ENCODE measurements at regions of chr7 and their contacts with region 1.

Region 1: DNA sequence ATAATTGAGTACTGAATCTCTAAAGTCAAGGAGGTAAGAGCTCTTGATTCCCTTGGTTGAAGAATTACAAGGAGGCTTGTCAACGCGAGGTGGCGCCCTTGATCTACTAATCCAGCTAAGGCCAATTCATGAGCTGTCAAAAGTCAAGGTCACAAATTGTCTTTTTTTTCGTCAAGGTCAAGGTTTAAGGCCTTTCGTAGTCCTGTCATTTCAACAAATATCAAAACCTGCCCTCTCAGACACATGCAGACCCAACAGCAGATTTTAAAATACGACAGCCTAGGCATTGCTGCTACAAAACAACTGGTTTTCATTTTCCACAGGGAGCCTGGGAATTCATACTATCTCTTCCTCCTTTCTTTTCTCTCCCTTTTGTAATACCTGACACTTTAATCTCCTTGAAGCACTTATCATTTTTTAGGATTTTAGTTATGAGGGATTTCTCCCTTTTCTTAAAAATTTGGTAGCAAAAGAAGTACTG is 3.6 kb downstream of the HOXA13 start:
- DNase-seq: peak; percentile 84
- H3K4me3 ChIP-seq: no peak overlapping the region
- H3K27ac ChIP-seq: no peak overlapping the region
- H3K4me1 ChIP-seq: peaks cover 16% of the 10 kb centered on the region
- H3K27me3 ChIP-seq: peaks cover 52 to 78% of the 10 kb centered on the region in 2 experiments
- CTCF ChIP-seq: peak; percentile 66 to 68
- POLR2A ChIP-seq: no peak

Region 2: GRCh38 chr7:27179503-27180430 is 16.6 kb before region 1 on chr7:
- CTCF ChIA-PET with region 1: interaction called, 28 read pairs
- POLR2A ChIA-PET with region 1: no interaction called
- dilution Hi-C with region 1: no loop called
- intact Hi-C with region 1: no loop called
- DNase-seq: peak; percentile 90
- H3K4me3 ChIP-seq: peak overlapping the region; percentile 53 to 94 (median 69)
- H3K27ac ChIP-seq: peak overlapping the region; percentile 96
- H3K4me1 ChIP-seq: peaks cover 65% of the 10 kb centered on the region
- H3K27me3 ChIP-seq: no peaks in the 10 kb centered on the region
- CTCF ChIP-seq: peak; percentile 93 to 97
- POLR2A ChIP-seq: no peak

Region 3: DNA sequence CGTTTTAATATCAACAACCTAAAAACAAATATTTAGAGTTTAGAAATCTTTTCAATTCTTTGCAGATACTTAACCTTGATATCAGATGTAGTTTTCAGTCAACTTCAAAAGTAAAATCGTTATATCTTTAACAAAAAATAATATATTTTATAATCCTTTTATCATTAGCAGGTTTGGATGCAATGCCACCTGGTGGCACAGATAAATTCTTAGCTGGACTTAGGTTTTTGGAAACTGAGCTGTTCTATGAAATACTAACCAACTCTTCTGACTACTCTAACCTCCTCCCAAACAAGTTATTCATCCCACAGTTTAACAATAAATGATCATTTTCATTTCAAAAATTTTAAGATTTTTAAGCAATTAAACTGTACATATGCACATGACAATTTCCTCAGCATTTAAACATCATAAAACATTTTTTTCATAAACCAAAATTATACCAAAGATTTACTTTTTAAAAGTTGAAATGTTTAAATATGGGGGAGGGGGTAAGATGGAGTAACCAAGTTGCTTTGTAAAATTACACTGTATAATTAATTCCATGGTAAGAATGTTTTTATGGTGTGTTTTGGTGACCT is 409.5 kb after region 1 on chr7:
- CTCF ChIA-PET with region 1: interaction called, 71 read pairs
- POLR2A ChIA-PET with region 1: no interaction called
- dilution Hi-C with region 1: no loop called
- intact Hi-C with region 1: loop called (anchors 1 kb)
- DNase-seq: peak; percentile 63
- H3K4me3 ChIP-seq: peak overlapping the region in 1 of 3 experiments; percentile 24
- H3K27ac ChIP-seq: peak overlapping the region; percentile 66
- H3K4me1 ChIP-seq: peaks cover 25% of the 10 kb centered on the region
- H3K27me3 ChIP-seq: no peaks in the 10 kb centered on the region
- CTCF ChIP-seq: peak in 1 of 2 donors; percentile 41
- POLR2A ChIP-seq: no peak

Region 4: GRCh38 chr7:27739909-27740448 is 543.7 kb after region 1 on chr7 and contains the start of gene TAX1BP1:
- CTCF ChIA-PET with region 1: interaction called, 31 read pairs
- POLR2A ChIA-PET with region 1: no interaction called
- dilution Hi-C with region 1: no loop called
- intact Hi-C with region 1: loop called (anchors 1 kb)
- DNase-seq: peak; percentile 94
- H3K4me3 ChIP-seq: peak within 1 kb of the TSS; percentile 78 to 83 (median 81)
- H3K27ac ChIP-seq: peak within 1 kb of the TSS; percentile 93
- H3K4me1 ChIP-seq: peaks cover 13% of the 10 kb centered on the region
- H3K27me3 ChIP-seq: no peaks in the 10 kb centered on the region
- CTCF ChIP-seq: no peak
- POLR2A ChIP-seq: peak; percentile 96
- total RNA-seq, gene TAX1BP1: 70.4 and 77.7 TPM in 2 replicates

Region 5: DNA sequence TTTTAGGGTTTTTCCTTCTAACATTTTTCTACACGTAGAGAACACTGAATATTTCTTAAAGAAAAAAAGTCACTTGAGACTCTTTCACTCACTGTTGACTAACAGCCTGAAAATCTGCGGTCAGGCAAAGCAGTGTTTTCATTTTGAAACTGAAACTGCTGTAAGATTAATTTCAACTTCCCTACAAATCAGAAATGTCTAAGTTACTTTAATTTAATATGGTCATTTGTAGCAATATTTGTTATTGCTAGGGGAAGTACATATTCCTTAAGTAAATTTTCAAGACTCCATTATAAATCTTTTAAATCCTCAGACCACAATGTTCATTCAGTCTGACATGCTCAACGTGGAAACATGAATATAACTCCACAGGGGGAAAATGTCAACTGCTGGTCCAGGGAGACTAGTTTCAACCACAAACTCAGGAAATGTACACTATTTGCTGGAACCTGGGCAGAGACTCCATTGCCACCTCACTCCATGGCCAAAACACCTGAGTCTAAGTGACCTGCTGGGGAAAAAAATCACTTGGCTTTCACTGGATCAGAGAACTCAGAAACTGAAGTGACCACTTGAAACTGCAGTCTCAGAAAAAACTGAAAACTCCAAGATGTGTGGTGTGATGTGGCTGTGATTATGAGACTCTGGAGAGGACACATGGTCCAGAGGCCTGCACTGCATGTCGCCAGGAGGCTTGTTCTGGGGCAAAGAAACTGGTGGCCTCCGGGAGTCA is 704.9 kb after region 1 on chr7:
- CTCF ChIA-PET with region 1: interaction called, 13 read pairs
- POLR2A ChIA-PET with region 1: no interaction called
- dilution Hi-C with region 1: no loop called
- intact Hi-C with region 1: no loop called
- DNase-seq: peak; percentile 61
- H3K4me3 ChIP-seq: peak overlapping the region in 1 of 3 experiments; percentile 69
- H3K27ac ChIP-seq: peak overlapping the region; percentile 33
- H3K4me1 ChIP-seq: peaks cover 10% of the 10 kb centered on the region
- H3K27me3 ChIP-seq: no peaks in the 10 kb centered on the region
- CTCF ChIP-seq: no peak
- POLR2A ChIP-seq: no peak

Region 6: DNA sequence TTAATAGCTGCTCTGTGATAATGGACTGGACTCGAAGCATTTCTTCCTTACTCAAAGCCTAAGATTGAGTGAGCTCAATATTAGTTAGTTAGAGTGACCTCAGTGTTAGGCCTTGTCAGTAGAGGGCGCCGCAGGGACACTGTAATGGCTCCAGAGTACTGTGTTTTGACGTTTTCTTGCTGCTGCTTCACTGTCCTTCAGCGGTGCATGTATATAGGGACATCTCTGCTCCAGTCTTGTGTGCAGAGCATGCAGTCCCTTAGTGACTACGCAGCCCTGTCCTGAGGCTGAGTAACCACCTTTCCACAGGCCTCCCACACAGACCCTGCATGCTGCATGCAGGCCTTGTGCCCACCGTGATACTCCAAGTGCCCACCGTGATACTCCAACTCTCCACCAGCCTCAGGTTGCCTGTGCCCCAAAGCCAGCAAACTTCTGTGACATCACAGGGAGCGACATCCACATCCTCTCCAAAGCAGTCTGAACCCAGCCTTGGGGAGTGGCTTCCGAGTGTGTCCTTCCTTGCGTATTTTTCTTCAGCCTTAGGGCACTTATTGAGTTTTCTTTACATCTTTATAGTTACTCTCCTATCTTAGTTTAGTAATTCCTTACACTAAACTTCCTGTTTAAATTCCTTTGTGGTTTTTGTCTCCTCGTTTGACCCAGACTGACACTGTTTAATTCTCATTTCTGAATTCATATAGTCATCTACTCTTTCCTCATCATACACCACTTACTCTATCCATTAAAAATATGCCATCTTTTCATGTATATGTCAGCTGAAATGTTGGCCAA is 866.1 kb after region 1 on chr7:
- CTCF ChIA-PET with region 1: interaction called, 14 read pairs
- POLR2A ChIA-PET with region 1: no interaction called
- dilution Hi-C with region 1: no loop called
- intact Hi-C with region 1: no loop called
- DNase-seq: peak; percentile 59
- H3K4me3 ChIP-seq: no peak overlapping the region
- H3K27ac ChIP-seq: no peak overlapping the region
- H3K4me1 ChIP-seq: peaks cover 6% of the 10 kb centered on the region
- H3K27me3 ChIP-seq: no peaks in the 10 kb centered on the region
- CTCF ChIP-seq: peak; percentile 67 to 77
- POLR2A ChIP-seq: no peak

Measured in endothelial cell of umbilical vein (primary cell).